GM10248 (cell line): ENCODE measurements at regions of chr12 and their contacts with region 1.

Region 1: GRCh38 chr12:118357257-118358007 is 15.3 kb downstream of the TAOK3 start:
- DNase-seq: peak; percentile 47
- CTCF ChIP-seq: peak; percentile 32

Region 2: DNA sequence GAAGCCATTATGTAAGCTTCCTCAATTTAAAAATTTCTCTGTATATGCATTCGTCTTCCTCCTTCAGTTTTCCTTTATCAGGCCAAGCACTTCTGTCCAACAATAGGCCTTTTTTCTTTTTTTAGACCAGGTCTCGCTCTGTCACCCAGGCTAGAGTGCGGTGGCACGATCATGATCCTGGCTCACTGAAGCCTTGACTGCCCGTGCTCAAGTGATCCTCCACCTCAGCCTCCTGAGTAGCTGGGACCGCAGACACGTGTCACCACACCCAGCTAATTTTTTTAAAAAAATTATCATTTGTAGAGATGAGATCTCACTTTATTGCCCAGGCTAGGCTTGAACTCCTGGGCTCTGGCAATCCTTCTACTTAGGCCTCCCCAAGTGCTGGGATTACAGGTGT is 10.5 kb before region 1 on chr12:
- CTCF ChIA-PET with region 1: interaction called, 47 read pairs
- POLR2A ChIA-PET with region 1: no interaction called
- DNase-seq: no peak
- CTCF ChIP-seq: no peak